ENCODE measurements at regions of chr1 and their contacts with region 1.

Region 1: DNA sequence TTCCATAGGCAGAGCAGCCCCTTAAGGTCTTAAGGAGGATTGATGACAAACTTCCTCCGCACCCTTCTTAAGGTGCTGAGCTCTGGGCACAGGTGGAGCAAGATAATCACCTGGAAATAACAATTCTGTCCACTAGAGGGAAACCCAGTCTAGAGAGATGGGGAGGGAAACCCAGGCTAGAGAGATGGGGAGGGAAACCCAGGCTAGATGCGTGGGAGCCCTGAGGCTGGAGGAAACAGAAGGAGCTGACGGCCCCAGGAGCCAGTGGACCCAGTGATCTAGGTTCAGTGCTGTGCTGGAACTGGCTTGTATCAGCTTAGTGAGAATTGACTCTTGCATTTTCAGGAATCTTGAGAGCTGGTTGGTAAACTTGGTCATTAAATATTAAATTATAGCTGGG is 17.8 kb upstream of the MYCL start:
- DNase-seq: peak; percentile 83
- ATAC-seq: peak; percentile 98
- H3K4me3 ChIP-seq: no peak overlapping the region
- H3K4me3 Mint-ChIP-seq: no peak overlapping the region
- H3K27ac ChIP-seq: no peak overlapping the region
- H3K27ac Mint-ChIP-seq: no peak overlapping the region
- H3K4me1 ChIP-seq: peaks cover 0 to 4% of the 10 kb centered on the region in 2 donors
- H3K4me1 Mint-ChIP-seq: no peaks in the 10 kb centered on the region
- H3K27me3 ChIP-seq: no peaks in the 10 kb centered on the region
- H3K27me3 Mint-ChIP-seq: peaks cover 8% of the 10 kb centered on the region
- CTCF ChIP-seq: peak; percentile 75

Region 2: GRCh38 chr1:39378377-39378776 is 541.2 kb before region 1 on chr1:
- CTCF ChIA-PET with region 1: no interaction called
- POLR2A ChIA-PET with region 1: no interaction called
- intact Hi-C with region 1: no loop called
- DNase-seq: no peak
- ATAC-seq: no peak
- H3K4me3 ChIP-seq: no peak overlapping the region
- H3K4me3 Mint-ChIP-seq: no peak overlapping the region
- H3K27ac ChIP-seq: no peak overlapping the region
- H3K27ac Mint-ChIP-seq: no peak overlapping the region
- H3K4me1 ChIP-seq: no peaks in the 10 kb centered on the region
- H3K4me1 Mint-ChIP-seq: no peaks in the 10 kb centered on the region
- H3K27me3 ChIP-seq: no peaks in the 10 kb centered on the region
- H3K27me3 Mint-ChIP-seq: no peaks in the 10 kb centered on the region
- CTCF ChIP-seq: no peak

Region 3: GRCh38 chr1:39788758-39789570 is 130.6 kb before region 1 on chr1 and contains the start of gene BMP8B:
- CTCF ChIA-PET with region 1: no interaction called
- POLR2A ChIA-PET with region 1: no interaction called
- intact Hi-C with region 1: no loop called
- DNase-seq: peak; percentile 77
- ATAC-seq: peak; percentile 86
- H3K4me3 ChIP-seq: peak within 1 kb of the TSS in 4 of 5 experiments; percentile 29 to 65 (median 54)
- H3K4me3 Mint-ChIP-seq: peak within 1 kb of the TSS; percentile 87
- H3K27ac ChIP-seq: no peak within 1 kb of the TSS
- H3K27ac Mint-ChIP-seq: peak within 1 kb of the TSS; percentile 86
- H3K4me1 ChIP-seq: peaks cover 5 to 7% of the 10 kb centered on the region in 2 donors
- H3K4me1 Mint-ChIP-seq: peaks cover 26% of the 10 kb centered on the region
- H3K27me3 ChIP-seq: peaks cover 0 to 16% (median 0%) of the 10 kb centered on the region in 4 experiments
- H3K27me3 Mint-ChIP-seq: peaks cover 15% of the 10 kb centered on the region
- CTCF ChIP-seq: no peak
- total RNA-seq, gene BMP8B: 2.3 and 2.5 TPM in 2 replicates

Region 4: GRCh38 chr1:39816415-39817090 is 103.0 kb before region 1 on chr1:
- CTCF ChIA-PET with region 1: interaction called, 7 read pairs
- POLR2A ChIA-PET with region 1: interaction called, 5 read pairs
- intact Hi-C with region 1: loop called (anchors 5 kb)
- DNase-seq: peak; percentile 80
- ATAC-seq: peak; percentile 61
- H3K4me3 ChIP-seq: peak overlapping the region in 4 of 5 experiments; percentile 25 to 45 (median 28)
- H3K4me3 Mint-ChIP-seq: peak overlapping the region; percentile 78
- H3K27ac ChIP-seq: no peak overlapping the region
- H3K27ac Mint-ChIP-seq: peak overlapping the region; percentile 38
- H3K4me1 ChIP-seq: peaks cover 6 to 15% of the 10 kb centered on the region in 2 donors
- H3K4me1 Mint-ChIP-seq: peaks cover 10% of the 10 kb centered on the region
- H3K27me3 ChIP-seq: no peaks in the 10 kb centered on the region
- H3K27me3 Mint-ChIP-seq: no peaks in the 10 kb centered on the region
- CTCF ChIP-seq: peak; percentile 78

Region 5: DNA sequence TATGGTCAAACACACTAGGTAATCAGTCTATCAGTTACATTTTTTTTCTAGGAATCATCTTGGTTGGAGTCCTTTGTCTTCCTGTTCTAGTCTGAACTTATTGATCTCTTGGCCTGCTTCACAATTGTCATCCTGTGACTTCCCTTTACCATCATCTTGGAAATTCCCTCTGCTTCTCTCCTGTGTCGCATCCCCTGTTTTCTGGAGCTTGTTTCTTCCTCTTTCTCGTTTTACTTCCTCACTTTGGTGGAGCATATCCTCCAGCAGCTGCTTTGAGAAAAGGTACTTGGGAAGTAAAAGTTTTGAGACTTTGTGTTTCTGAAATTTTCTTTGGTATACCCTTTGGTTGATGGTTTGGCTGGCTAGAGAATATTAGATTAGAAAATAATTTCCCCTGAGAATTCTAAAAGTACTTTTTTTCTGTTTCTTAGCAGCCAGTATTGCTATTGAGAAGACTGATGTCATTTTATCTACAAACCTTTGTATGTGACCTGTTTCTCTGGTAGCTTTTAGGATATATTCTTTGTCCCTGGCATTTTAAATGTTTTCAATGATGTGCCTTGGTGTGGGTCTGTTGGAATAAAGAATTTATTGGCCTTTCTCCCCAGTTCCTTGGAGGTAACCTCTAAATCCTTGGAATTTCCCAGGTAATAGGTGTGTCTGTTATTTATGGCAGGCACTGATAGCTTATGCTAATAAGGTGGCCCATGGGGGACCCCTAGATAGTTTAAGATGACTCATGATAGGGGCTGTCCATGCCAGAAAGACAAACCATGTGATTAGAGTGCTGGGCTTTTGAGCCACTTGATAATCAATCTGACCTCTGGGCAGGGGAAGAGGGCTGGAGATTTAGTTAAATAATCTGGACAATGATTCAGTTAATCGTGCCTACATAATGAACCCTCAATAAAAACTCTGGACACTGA is 11.8 kb before region 1 on chr1:
- CTCF ChIA-PET with region 1: interaction called, 20 read pairs
- POLR2A ChIA-PET with region 1: interaction called, 6 read pairs
- intact Hi-C with region 1: no loop called
- DNase-seq: peak; percentile 36
- ATAC-seq: no peak
- H3K4me3 ChIP-seq: no peak overlapping the region
- H3K4me3 Mint-ChIP-seq: no peak overlapping the region
- H3K27ac ChIP-seq: no peak overlapping the region
- H3K27ac Mint-ChIP-seq: no peak overlapping the region
- H3K4me1 ChIP-seq: peaks cover 0 to 4% of the 10 kb centered on the region in 2 donors
- H3K4me1 Mint-ChIP-seq: peaks cover 6% of the 10 kb centered on the region
- H3K27me3 ChIP-seq: peaks cover 0 to 39% (median 10%) of the 10 kb centered on the region in 4 experiments
- H3K27me3 Mint-ChIP-seq: peaks cover 47% of the 10 kb centered on the region
- CTCF ChIP-seq: no peak

Region 6: DNA sequence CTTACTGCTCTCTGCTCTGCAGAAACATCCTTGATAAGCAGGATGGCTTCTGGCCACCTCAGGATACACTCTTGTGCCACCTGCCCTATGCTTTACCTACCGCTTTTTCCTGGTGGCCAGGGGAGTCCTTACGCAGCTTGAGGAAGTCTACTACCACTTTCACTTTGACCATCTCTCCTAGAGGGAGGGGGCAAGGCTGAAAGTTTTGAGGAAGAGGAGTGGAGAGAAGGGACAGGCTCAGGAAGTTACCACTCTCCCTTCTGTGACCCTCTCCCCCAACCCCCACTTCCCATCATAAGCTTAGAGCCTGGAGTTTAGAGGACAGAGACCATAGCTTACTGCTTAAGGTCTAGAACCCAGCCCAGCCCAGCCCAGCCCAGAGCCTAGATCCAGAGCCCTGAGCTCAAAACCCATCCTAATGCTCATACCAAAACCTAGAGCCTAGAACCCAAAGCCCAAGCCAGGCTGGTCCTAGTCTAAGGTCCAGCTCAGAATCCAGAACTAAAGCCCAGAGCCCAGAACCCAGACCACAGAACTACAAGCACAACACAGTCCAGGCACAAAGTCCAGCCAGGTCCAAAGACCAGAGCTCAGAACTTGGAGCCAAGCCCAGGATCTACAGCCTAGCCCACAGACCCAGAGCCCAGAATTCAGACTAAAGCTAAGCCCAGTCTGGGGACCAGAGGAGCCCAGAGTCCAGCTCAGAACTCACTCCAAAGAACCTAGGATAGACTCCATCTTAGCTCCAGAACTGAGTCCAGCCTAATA is 17.4 kb after region 1 on chr1:
- CTCF ChIA-PET with region 1: interaction called, 10 read pairs
- POLR2A ChIA-PET with region 1: interaction called, 3 read pairs
- intact Hi-C with region 1: no loop called
- DNase-seq: no peak
- ATAC-seq: no peak
- H3K4me3 ChIP-seq: no peak overlapping the region
- H3K4me3 Mint-ChIP-seq: no peak overlapping the region
- H3K27ac ChIP-seq: no peak overlapping the region
- H3K27ac Mint-ChIP-seq: no peak overlapping the region
- H3K4me1 ChIP-seq: peaks cover 0 to 5% of the 10 kb centered on the region in 2 donors
- H3K4me1 Mint-ChIP-seq: peaks cover 3% of the 10 kb centered on the region
- H3K27me3 ChIP-seq: peaks cover 0 to 2% (median 0%) of the 10 kb centered on the region in 4 experiments
- H3K27me3 Mint-ChIP-seq: no peaks in the 10 kb centered on the region
- CTCF ChIP-seq: no peak

Region 7: GRCh38 chr1:39954816-39955546 is 35.4 kb after region 1 on chr1 and contains the start of gene MFSD2A:
- CTCF ChIA-PET with region 1: interaction called, 27 read pairs
- POLR2A ChIA-PET with region 1: no interaction called
- intact Hi-C with region 1: no loop called
- DNase-seq: peak; percentile 91
- ATAC-seq: peak; percentile 98
- H3K4me3 ChIP-seq: peak within 1 kb of the TSS; percentile 45 to 94 (median 67)
- H3K4me3 Mint-ChIP-seq: peak within 1 kb of the TSS; percentile 90
- H3K27ac ChIP-seq: peak within 1 kb of the TSS; percentile 27 to 48
- H3K27ac Mint-ChIP-seq: peak within 1 kb of the TSS; percentile 84
- H3K4me1 ChIP-seq: peaks cover 15 to 30% of the 10 kb centered on the region in 2 donors
- H3K4me1 Mint-ChIP-seq: peaks cover 37% of the 10 kb centered on the region
- H3K27me3 ChIP-seq: no peaks in the 10 kb centered on the region
- H3K27me3 Mint-ChIP-seq: peaks cover under 1% of the 10 kb centered on the region
- CTCF ChIP-seq: no peak
- total RNA-seq, gene MFSD2A: 3.9 TPM in 2 replicates

Region 8: GRCh38 chr1:39960431-39960958 is 41.0 kb after region 1 on chr1:
- CTCF ChIA-PET with region 1: interaction called, 34 read pairs
- POLR2A ChIA-PET with region 1: no interaction called
- intact Hi-C with region 1: no loop called
- DNase-seq: peak; percentile 88
- ATAC-seq: peak; percentile 95
- H3K4me3 ChIP-seq: peak overlapping the region; percentile 6 to 34 (median 26)
- H3K4me3 Mint-ChIP-seq: peak overlapping the region; percentile 77
- H3K27ac ChIP-seq: peak overlapping the region; percentile 71 to 73
- H3K27ac Mint-ChIP-seq: peak overlapping the region; percentile 93
- H3K4me1 ChIP-seq: peaks cover 25 to 46% of the 10 kb centered on the region in 2 donors
- H3K4me1 Mint-ChIP-seq: peaks cover 47% of the 10 kb centered on the region
- H3K27me3 ChIP-seq: no peaks in the 10 kb centered on the region
- H3K27me3 Mint-ChIP-seq: no peaks in the 10 kb centered on the region
- CTCF ChIP-seq: no peak

Region 9: GRCh38 chr1:40096977-40097782 is 177.6 kb after region 1 on chr1 and contains the start of gene PPT1:
- CTCF ChIA-PET with region 1: no interaction called
- POLR2A ChIA-PET with region 1: no interaction called
- intact Hi-C with region 1: no loop called
- DNase-seq: peak; percentile 86
- ATAC-seq: peak; percentile 92
- H3K4me3 ChIP-seq: peak within 1 kb of the TSS; percentile 69 to 80 (median 79)
- H3K4me3 Mint-ChIP-seq: peak within 1 kb of the TSS; percentile 88
- H3K27ac ChIP-seq: peak within 1 kb of the TSS; percentile 53 to 68
- H3K27ac Mint-ChIP-seq: peak within 1 kb of the TSS; percentile 92
- H3K4me1 ChIP-seq: peaks cover 14 to 20% of the 10 kb centered on the region in 2 donors
- H3K4me1 Mint-ChIP-seq: peaks cover 19% of the 10 kb centered on the region
- H3K27me3 ChIP-seq: no peaks in the 10 kb centered on the region
- H3K27me3 Mint-ChIP-seq: peaks cover 15% of the 10 kb centered on the region
- CTCF ChIP-seq: peak; percentile 61
- total RNA-seq, gene PPT1: 32.1 and 38.2 TPM in 2 replicates